Heart right ventricle (tissue), 16 donors: ENCODE measurements at regions of chr7 and their contacts with region 1.

Region 1: GRCh38 chr7:22295402-22296264 is 61.3 kb downstream of the RAPGEF5 start:
- DNase-seq: no peak
- ATAC-seq: peak in 7 of 8 donors; percentile 55 to 89 (median 64)
- H3K4me3 ChIP-seq: no peak overlapping the region
- H3K27ac ChIP-seq: peak overlapping the region in 1 of 10 donors; percentile 31
- H3K4me1 ChIP-seq: peaks cover 0 to 14% (median 6%) of the 10 kb centered on the region in 9 donors
- H3K27me3 ChIP-seq: no peaks in the 10 kb centered on the region
- CTCF ChIP-seq: peak in 8 of 9 donors; percentile 12 to 60 (median 36)

Region 2: DNA sequence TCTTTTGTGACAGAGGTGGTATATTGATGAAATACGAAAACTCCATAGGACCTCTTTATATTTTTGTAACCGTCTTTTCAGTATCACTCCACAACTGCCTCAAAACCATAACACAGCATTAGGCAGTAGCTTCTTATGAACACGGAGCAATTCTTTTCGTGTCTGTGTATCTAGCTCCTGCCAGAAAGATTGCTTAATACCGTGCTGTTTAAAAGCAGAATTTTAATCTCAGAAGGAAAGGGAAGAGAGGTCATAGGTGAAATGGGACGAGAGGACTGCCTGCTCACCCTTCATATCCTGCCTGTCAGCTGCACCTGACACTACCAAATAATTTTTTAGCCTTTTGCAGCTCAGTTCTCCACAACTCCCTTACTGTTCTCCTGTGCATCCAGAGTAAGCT is 552.1 kb before region 1 on chr7:
- intact Hi-C with region 1: loop called in 1 of 10 experiments (anchors 10 kb)
- DNase-seq: no peak
- ATAC-seq: no peak
- H3K4me3 ChIP-seq: no peak overlapping the region
- H3K27ac ChIP-seq: no peak overlapping the region
- H3K4me1 ChIP-seq: no peaks in the 10 kb centered on the region
- H3K27me3 ChIP-seq: peaks cover 0 to 6% (median 0%) of the 10 kb centered on the region in 7 donors
- CTCF ChIP-seq: no peak

Region 3: DNA sequence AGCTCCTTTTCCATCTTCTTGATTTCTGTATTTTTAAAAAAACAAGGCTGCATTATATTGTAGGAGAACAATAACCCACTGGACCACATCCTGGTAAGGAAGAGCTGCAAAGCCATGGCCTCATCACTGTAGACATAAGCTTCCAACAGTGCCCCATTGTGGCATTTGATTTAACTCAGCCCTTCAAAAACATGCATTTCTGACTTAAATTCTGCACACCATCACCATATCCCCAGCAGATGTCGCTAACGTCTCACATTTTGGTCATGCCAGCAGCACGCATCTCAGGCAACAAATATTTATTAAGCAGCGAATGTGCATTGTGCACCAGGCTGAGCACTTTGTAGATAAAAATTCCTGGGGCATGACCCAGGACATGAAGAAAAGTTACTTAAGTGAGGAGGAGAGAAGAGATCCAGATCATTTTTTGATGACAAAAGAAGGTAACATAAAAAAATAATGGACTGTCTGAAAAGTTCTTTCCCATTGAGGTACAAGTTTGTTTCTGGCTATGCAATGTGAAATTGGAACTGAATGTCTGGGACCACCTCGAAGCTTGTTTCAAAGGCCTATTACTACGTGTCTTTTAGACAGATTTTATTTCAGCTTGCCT is 185.3 kb before region 1 on chr7:
- intact Hi-C with region 1: loop called in 8 of 10 experiments (anchors 2 to 10 kb)
- DNase-seq: peak in 1 of 2 donors; percentile 77
- ATAC-seq: peak; percentile 51 to 83 (median 74)
- H3K4me3 ChIP-seq: no peak overlapping the region
- H3K27ac ChIP-seq: peak overlapping the region in 2 of 10 donors; percentile 10 to 23
- H3K4me1 ChIP-seq: peaks cover 0 to 25% (median 8%) of the 10 kb centered on the region in 9 donors
- H3K27me3 ChIP-seq: peaks cover 0 to 7% (median 0%) of the 10 kb centered on the region in 7 donors
- CTCF ChIP-seq: peak; percentile 72 to 89 (median 81)

Region 4: DNA sequence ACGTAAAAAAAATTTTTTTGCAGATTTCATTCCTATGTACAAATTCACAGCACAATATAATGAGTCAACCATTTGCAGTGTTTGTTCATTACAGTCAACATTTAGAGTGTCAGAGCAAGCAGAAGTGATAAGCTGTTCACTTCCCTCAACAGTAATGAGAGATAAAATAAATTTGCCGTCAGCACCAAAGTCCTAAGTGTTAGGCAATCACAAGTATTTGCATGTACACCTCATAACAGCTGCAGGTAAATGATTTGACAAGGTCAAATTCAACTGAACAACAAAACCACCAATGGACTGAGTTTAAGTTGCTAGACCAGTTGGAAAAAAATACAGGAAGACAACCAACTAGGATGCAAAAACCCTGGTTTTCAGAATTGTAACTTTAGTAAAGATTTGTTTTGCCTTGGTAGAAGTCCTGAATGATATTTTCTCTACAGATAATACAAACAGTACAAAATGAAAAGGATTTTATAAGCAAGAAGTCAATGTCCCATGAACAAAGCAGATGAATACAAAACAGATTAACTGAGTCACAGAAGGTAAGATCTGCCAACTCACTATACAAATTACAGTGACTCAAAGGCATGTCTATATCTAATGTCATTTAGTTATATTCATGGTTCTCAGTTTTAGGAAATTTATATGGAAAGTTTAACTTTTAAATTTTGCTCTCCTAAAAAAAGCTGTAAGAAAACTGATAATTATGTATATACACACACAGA is 50.9 kb after region 1 on chr7:
- intact Hi-C with region 1: loop called in 1 of 10 experiments (anchors 5 kb)
- DNase-seq: no peak
- ATAC-seq: no peak
- H3K4me3 ChIP-seq: no peak overlapping the region
- H3K27ac ChIP-seq: no peak overlapping the region
- H3K4me1 ChIP-seq: peaks cover 0 to 13% (median 5%) of the 10 kb centered on the region in 9 donors
- H3K27me3 ChIP-seq: no peaks in the 10 kb centered on the region
- CTCF ChIP-seq: no peak

Region 5: GRCh38 chr7:22452142-22452959 is 156.7 kb after region 1 on chr7:
- intact Hi-C with region 1: loop called in 1 of 10 experiments (anchors 10 kb)
- DNase-seq: peak; percentile 57 to 68
- ATAC-seq: peak in 7 of 8 donors; percentile 68 to 95 (median 84)
- H3K4me3 ChIP-seq: peak overlapping the region in 7 of 10 donors; percentile 11 to 42 (median 31)
- H3K27ac ChIP-seq: peak overlapping the region in 2 of 10 donors; percentile 11 to 34
- H3K4me1 ChIP-seq: peaks cover 0 to 19% (median 0%) of the 10 kb centered on the region in 9 donors
- H3K27me3 ChIP-seq: peaks cover 0 to 26% (median 0%) of the 10 kb centered on the region in 7 donors
- CTCF ChIP-seq: peak; percentile 53 to 88 (median 79)

Region 6: DNA sequence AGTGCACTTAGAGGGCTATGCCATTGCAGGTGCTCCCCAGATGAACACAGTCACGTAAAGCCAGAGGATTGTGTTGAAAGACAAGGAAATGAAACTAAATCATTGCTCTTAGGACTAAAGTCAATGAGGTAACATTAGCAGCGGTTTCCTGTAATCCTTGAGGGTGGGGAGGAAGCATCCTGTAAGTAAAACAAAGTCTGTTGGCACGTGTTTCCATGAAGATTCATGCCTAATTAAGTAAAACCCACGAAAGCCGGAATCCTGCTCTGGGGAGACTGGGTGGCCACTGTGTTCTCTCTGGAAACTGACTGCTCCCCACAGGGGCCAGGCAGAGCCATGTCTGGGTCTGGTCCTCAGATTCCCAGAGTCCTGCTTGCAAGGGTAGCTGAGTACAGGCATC is 186.1 kb after region 1 on chr7:
- intact Hi-C with region 1: loop called in 7 of 10 experiments (anchors 5 to 10 kb)
- DNase-seq: peak in 1 of 2 donors; percentile 39
- ATAC-seq: peak; percentile 54 to 91 (median 77)
- H3K4me3 ChIP-seq: no peak overlapping the region
- H3K27ac ChIP-seq: peak overlapping the region in 7 of 10 donors; percentile 21 to 71 (median 57)
- H3K4me1 ChIP-seq: peaks cover 0 to 15% (median 10%) of the 10 kb centered on the region in 9 donors
- H3K27me3 ChIP-seq: no peaks in the 10 kb centered on the region
- CTCF ChIP-seq: no peak

Region 7: DNA sequence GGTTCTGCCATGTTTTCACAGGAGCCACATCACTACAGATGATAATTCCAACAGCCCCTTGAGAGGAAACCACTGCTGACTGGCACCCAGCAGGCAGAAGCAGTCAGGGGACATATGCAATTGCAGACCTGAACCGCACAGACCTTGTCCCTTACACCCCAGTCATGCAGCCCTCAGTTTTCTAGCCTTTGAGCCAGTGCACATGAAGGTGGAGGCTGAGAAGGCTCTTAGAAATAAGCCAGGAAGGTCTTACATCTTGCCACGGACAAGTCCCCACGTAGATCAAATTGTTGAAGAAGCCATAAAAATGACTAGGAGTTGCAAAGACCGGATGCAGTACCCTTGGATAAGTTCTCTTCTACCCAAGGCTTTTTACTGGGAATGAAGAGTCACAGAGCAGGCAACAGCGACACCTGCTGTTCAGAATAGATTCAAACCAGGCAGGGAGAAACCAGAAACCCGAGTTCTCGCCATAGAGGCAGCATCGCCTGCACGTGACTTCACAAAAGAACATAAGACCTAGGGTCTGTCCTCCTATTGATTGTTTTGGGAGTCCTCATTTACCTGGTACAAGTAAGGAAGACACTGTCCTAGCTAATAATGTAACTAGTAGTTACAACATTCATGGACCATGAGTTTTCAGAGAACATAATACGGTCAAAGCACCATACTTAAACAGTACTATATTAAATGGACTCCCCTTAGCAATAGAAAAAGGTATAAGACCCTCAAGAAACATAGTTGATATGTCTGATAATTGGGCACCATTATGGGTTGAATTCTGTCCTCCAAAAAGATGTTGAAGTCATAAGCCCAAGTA is 193.2 kb after region 1 on chr7:
- intact Hi-C with region 1: loop called in 7 of 10 experiments (anchors 5 to 10 kb)
- DNase-seq: peak in 1 of 2 donors; percentile 68
- ATAC-seq: peak; percentile 76 to 93 (median 83)
- H3K4me3 ChIP-seq: no peak overlapping the region
- H3K27ac ChIP-seq: no peak overlapping the region
- H3K4me1 ChIP-seq: peaks cover 0 to 11% (median 0%) of the 10 kb centered on the region in 9 donors
- H3K27me3 ChIP-seq: peaks cover 0 to 6% (median 0%) of the 10 kb centered on the region in 7 donors
- CTCF ChIP-seq: peak; percentile 77 to 97 (median 92)